ENCODE measurements at regions of chr5 and their contacts with region 1.

Region 1: GRCh38 chr5:124748687-124749594 is 2.5 kb upstream of the ZNF608 start:
- DNase-seq: peak; percentile 91

Region 2: DNA sequence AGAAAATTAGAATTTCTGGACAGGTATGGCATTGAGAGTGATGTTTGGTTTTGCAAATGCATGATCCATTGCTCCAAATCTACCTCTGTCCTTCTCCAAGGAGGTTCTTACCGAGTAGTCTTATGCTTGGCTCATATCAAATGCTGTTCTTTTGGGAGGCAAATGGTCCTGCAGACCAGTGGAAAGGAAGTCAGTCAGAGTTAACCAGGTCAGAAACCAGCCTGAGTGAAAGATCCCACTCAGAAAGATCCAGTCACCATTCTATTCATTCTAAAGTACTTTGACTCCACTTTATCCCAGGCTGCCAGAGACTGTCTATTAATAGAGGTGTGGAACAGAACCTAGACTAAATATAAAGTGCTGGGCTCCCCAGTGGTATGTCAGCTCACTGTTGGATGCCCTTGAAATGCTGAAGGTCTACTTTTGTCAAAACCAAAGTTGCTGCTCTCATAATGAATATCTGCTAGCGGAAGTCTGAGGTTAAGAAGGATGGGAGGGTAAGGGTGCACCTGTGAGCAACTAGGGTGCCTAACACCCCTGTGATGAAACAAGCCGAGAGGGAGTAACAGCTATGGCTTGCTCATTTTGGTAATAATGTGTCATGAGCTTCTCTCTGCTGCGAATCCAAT is 304.7 kb before region 1 on chr5:
- intact Hi-C with region 1: loop called (anchors 10 kb)
- DNase-seq: no peak

Region 3: GRCh38 chr5:124605541-124605940 is 143.4 kb before region 1 on chr5:
- intact Hi-C with region 1: loop called (anchors 5 kb)
- DNase-seq: no peak

Region 4: DNA sequence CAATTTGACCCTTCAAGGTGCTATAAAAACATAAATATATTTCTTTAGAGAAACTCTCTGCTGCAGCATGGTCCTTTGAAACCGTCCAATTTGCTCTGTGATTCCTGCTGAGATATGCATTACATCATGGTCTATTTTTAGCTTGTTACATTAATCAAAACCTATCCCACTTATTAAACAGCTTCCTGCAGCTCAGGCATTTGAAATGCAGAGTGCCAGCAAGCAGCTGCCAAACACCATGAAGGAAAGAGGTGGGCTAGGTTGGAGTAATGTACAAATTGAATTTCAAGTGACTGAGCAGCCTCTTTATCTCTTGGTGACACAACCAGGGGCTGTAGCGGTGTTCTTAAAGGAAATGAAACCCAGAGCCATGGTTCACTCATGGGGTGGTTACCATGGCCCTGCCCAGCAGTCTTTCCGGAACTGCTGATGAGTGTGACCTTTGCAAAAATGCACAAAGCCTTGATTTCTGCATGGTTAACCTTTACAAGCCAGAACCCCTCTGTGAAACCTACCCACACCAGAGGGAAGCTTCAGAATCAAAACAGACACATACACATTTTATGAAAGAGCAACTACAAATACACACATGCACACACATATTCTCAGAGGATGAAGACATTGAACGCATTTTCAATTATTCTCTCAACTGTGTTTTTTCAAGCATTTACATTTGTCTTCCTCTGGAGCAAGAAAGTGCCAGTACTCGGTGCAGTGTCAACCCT is 153.3 kb after region 1 on chr5:
- intact Hi-C with region 1: loop called (anchors 1 kb)
- DNase-seq: no peak

Region 5: GRCh38 chr5:125198270-125198974 is 449.5 kb after region 1 on chr5:
- intact Hi-C with region 1: loop called (anchors 5 kb)
- DNase-seq: peak; percentile 85

Measured in cardiac septum (tissue), 1 donor.